CD8-positive, alpha-beta T cell (primary cell): ENCODE measurements at regions of chr11 and their contacts with region 1.

Region 1: DNA sequence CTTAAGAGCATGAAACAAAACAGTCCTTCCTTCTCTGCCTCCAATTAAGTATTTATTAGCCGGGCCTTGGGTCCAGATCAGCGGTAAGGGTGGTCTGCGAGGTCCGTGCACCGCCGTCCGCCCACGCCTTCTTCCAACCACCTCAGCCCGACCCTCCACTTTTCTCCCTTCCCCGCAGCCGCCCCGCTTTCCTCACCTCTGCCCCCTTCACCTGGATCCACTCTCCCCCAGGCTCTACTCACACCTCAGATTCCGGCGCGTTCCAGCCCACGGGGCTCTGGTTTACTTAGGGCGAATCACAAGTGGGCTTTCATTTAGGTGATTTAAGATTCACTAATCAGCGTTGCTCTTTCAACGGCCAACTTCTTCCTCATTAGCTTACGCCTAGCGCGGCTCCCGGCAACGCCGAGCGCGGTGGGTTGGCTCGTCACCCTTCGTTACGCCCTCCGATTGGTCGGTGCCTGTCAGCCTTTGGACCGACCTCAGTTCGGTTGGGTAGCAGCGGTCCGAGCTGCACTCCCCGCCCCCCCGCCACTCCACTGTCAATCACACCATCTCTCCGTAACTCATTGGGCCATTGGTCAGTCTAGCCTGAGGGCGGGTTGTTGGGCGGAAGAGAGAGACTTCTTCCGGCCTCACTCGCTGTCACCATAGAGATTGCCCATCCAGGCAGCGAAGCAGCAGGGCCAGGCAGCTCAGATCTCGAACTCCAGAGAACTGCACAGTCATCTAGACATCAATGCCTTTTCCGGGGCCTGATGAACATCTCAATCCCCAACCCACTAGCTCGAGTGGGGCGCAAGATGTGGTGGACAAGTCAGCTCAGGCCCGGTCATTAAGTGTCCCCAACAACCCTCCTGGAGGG is at the start of gene TMEM218:
- DNase-seq: peak; percentile 89 to 99 (median 93)
- ATAC-seq: peak; percentile 88
- H3K4me3 ChIP-seq: peak within 1 kb of the TSS; percentile 89 to 92
- H3K4me3 Mint-ChIP-seq: peak within 1 kb of the TSS; percentile 99
- H3K27ac ChIP-seq: peak within 1 kb of the TSS; percentile 75 to 86
- H3K27ac Mint-ChIP-seq: peak within 1 kb of the TSS; percentile 96
- H3K4me1 ChIP-seq: peaks cover 15% of the 10 kb centered on the region
- H3K4me1 Mint-ChIP-seq: peaks cover 20% of the 10 kb centered on the region
- H3K27me3 ChIP-seq: no peaks in the 10 kb centered on the region
- H3K27me3 Mint-ChIP-seq: no peaks in the 10 kb centered on the region
- CTCF ChIP-seq: no peak
- total RNA-seq, gene TMEM218: 2.5 to 3.4 TPM

Region 2: GRCh38 chr11:124622531-124623451 is 488.8 kb before region 1 on chr11 and contains the start of gene TBRG1:
- CTCF ChIA-PET with region 1: no interaction called
- POLR2A ChIA-PET with region 1: no interaction called
- intact Hi-C with region 1: loop called (anchors 2 to 10 kb)
- DNase-seq: peak; percentile 62 to 95 (median 84)
- ATAC-seq: peak; percentile 97
- H3K4me3 ChIP-seq: peak within 1 kb of the TSS; percentile 94 to 100
- H3K4me3 Mint-ChIP-seq: peak within 1 kb of the TSS; percentile 97
- H3K27ac ChIP-seq: peak within 1 kb of the TSS; percentile 95 to 97
- H3K27ac Mint-ChIP-seq: peak within 1 kb of the TSS; percentile 99
- H3K4me1 ChIP-seq: peaks cover 16% of the 10 kb centered on the region
- H3K4me1 Mint-ChIP-seq: peaks cover 43% of the 10 kb centered on the region
- H3K27me3 ChIP-seq: no peaks in the 10 kb centered on the region
- H3K27me3 Mint-ChIP-seq: peaks cover 6% of the 10 kb centered on the region
- CTCF ChIP-seq: no peak
- total RNA-seq, gene TBRG1: 59.2 to 61.0 TPM

Region 3: DNA sequence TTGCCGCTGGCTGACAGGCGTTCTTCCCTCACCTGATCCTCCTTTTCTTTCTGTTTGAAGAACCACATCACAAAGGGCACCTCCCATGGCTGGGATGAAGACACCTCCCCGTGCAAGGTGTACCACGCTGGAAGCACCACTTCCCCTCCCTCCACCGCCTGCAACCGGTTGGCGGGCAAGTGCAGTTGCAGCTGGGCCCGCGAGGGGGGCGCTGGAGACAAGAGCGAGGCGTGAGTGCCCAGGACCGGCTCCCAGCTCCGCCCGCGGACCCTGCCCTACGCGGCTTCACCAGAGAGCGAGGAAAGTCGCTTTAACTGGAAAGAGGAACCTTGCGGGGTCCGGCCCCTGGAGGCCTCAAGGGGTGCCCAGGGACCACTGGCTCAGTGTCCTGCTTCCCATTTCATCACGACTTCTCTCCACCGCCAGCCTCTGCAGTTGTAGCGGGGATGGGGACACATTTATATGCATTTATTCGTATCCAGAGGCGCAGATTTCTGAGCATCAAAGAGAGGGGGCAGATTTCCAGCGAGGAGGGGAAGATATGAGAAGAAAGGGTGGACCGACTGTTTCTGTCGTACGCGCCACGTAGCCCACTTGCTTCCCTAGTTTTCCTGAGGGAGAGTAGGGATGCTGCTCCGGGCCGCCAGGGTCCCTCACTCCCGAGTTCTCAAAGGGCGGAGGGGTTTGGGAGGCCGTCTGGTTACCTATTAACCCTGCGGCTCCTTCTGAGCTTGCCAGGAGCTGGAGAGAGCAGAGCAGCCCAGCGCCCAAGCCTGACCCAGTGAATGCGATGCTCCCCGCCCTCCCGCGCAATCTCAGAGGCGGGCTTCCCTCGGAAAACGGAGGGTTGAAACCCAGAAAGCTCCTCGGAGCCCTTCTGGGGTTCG is 353.0 kb before region 1 on chr11:
- CTCF ChIA-PET with region 1: no interaction called
- POLR2A ChIA-PET with region 1: no interaction called
- intact Hi-C with region 1: loop called in 1 of 2 experiments (anchors 5 kb)
- DNase-seq: peak; percentile 42 to 78 (median 70)
- ATAC-seq: peak; percentile 72
- H3K4me3 ChIP-seq: peak overlapping the region; percentile 6 to 16
- H3K4me3 Mint-ChIP-seq: peak overlapping the region; percentile 58
- H3K27ac ChIP-seq: no peak overlapping the region
- H3K27ac Mint-ChIP-seq: no peak overlapping the region
- H3K4me1 ChIP-seq: peaks cover 34% of the 10 kb centered on the region
- H3K4me1 Mint-ChIP-seq: peaks cover 33% of the 10 kb centered on the region
- H3K27me3 ChIP-seq: peaks cover 32 to 39% of the 10 kb centered on the region in 2 experiments
- H3K27me3 Mint-ChIP-seq: peaks cover 40% of the 10 kb centered on the region
- CTCF ChIP-seq: peak; percentile 81

Region 4: DNA sequence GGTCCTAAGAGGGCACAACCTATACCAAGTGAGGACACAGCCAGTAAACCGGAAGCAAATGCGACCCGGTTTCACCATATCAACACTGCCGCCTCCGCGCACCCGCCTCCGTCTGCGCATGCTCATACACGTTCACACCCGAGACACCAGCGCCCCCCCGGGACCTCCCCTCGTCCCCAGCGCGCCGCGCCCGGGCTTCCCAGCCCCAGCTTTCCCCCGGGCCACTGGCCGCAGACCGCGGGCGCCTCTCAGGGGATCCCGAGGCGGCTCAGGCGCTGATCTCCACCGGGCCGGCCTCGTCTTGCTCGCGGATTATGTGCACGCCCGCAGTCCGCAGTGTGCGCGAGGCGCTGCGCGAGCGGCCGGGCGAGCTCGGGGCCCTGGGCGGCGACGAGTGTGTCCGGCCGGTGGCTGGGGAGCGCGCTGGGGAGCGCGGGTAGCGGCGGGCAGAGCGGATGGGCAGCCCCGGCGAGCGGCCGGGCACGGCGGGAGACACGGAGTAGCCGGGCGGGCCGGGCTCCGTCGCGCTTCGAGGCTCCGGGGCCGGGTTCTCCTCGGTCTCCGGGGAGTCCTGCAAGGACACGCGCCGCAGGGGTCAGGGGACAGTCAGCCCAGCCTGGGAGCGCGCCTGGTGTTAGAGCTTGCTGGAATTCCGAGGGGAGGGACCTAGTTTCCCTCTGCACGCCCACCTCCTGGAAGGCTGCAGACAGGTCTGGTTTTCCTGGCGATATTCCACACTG is 190.5 kb before region 1 on chr11:
- CTCF ChIA-PET with region 1: no interaction called
- POLR2A ChIA-PET with region 1: interaction called, 3 read pairs
- intact Hi-C with region 1: loop called in 1 of 2 experiments (anchors 1 kb)
- DNase-seq: peak; percentile 53 to 94 (median 81)
- ATAC-seq: peak; percentile 87
- H3K4me3 ChIP-seq: peak overlapping the region; percentile 25 to 42
- H3K4me3 Mint-ChIP-seq: peak overlapping the region; percentile 83
- H3K27ac ChIP-seq: peak overlapping the region in 1 of 2 experiments; percentile 42
- H3K27ac Mint-ChIP-seq: peak overlapping the region; percentile 77
- H3K4me1 ChIP-seq: peaks cover 28% of the 10 kb centered on the region
- H3K4me1 Mint-ChIP-seq: peaks cover 27% of the 10 kb centered on the region
- H3K27me3 ChIP-seq: no peaks in the 10 kb centered on the region
- H3K27me3 Mint-ChIP-seq: no peaks in the 10 kb centered on the region
- CTCF ChIP-seq: no peak

Region 5: DNA sequence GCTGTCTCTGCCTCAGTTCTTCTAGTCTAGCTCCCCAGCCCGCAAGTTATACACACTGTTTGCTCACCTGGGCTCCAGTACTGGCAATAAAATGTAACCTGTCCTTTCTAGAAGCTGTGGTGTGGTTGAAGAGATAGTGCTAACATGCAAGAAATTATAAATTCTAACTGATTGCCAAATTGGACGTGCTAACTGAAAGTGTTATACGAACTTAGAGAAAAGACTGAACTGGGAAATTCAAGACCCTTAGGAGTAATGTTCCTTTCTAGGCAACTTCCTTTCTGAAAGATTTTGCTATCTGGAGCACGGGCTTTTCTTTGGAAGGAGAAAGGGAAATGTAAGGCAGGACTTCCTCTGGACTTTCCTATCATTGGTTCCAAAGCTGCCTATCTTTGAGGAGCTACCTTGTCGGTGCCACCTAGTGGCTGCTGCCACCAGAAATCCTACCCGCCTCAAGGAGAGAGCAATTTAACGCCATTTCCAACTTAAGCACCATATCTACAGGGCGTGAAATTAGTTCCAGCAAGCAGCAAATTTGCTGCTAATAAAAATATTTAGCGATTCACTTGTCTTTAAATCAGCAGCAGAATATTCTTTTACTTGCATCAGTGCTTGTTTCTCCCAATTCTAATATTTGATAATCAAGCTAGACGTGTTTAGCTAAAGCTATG is 12.5 kb after region 1 on chr11:
- CTCF ChIA-PET with region 1: interaction called, 13 read pairs
- POLR2A ChIA-PET with region 1: interaction called, 14 read pairs
- intact Hi-C with region 1: no loop called
- DNase-seq: peak in 5 of 9 experiments; percentile 28 to 64 (median 33)
- ATAC-seq: peak; percentile 48
- H3K4me3 ChIP-seq: no peak overlapping the region
- H3K4me3 Mint-ChIP-seq: no peak overlapping the region
- H3K27ac ChIP-seq: no peak overlapping the region
- H3K27ac Mint-ChIP-seq: no peak overlapping the region
- H3K4me1 ChIP-seq: no peaks in the 10 kb centered on the region
- H3K4me1 Mint-ChIP-seq: peaks cover 7% of the 10 kb centered on the region
- H3K27me3 ChIP-seq: peaks cover 0 to 12% of the 10 kb centered on the region in 2 experiments
- H3K27me3 Mint-ChIP-seq: peaks cover 24% of the 10 kb centered on the region
- CTCF ChIP-seq: peak; percentile 18

Region 6: DNA sequence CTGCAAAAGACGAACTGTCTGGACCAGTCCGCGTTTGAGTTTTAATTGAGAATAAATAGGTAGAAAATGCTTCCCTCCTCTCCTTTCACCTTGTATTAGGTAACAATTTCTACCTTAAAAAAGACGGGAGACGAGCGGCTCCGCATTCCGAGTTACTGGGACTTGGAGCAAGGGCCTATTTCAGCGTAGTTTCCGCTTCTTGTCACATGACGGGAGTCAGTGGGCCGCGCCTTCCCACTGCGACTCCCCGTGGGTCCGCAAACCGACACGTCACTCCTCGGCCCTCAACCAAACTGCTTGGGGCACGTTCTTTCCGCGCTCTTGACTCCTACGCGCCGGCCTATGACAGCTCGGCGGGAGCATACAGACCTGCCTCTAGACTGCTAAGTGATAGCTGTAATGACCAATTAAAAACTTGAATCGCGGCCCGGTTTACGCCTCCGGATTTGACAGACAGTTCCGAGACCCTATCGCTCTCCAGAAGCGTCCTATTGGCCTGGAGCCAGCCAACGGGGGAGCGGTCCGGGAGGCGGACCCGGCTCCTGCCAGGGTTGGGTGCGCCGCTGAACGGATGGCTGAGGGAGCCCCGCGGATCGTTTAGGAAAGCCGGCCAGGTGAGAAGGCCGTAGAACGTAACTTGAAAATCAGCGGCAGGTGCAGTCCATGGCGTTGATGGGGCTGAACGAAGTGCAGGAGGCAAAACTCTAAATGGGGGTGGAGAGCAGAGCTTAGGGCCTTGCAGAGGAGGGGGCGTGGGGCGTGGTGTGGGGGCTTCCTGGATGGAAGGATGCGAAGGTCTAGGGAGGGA is 480.9 kb after region 1 on chr11 and contains the start of gene STT3A:
- CTCF ChIA-PET with region 1: no interaction called
- POLR2A ChIA-PET with region 1: no interaction called
- intact Hi-C with region 1: loop called (anchors 5 kb)
- DNase-seq: peak; percentile 96 to 99 (median 98)
- ATAC-seq: peak; percentile 91
- H3K4me3 ChIP-seq: peak within 1 kb of the TSS; percentile 90 to 97
- H3K4me3 Mint-ChIP-seq: peak within 1 kb of the TSS; percentile 92
- H3K27ac ChIP-seq: peak within 1 kb of the TSS; percentile 88 to 96
- H3K27ac Mint-ChIP-seq: peak within 1 kb of the TSS; percentile 98
- H3K4me1 ChIP-seq: peaks cover 15% of the 10 kb centered on the region
- H3K4me1 Mint-ChIP-seq: peaks cover 43% of the 10 kb centered on the region
- H3K27me3 ChIP-seq: no peaks in the 10 kb centered on the region
- H3K27me3 Mint-ChIP-seq: no peaks in the 10 kb centered on the region
- CTCF ChIP-seq: no peak
- total RNA-seq, gene STT3A: 45.5 to 46.8 TPM

Region 7: GRCh38 chr11:126268708-126269579 is 1157.4 kb after region 1 on chr11 and contains the starts of genes FOXRED1 and SRPRA:
- CTCF ChIA-PET with region 1: no interaction called
- POLR2A ChIA-PET with region 1: no interaction called
- intact Hi-C with region 1: loop called in 1 of 2 experiments (anchors 2 kb)
- DNase-seq: peak; percentile 99 to 100 (median 100)
- ATAC-seq: peak; percentile 99
- H3K4me3 ChIP-seq: peak within 1 kb of the TSS; percentile 90 to 98
- H3K4me3 Mint-ChIP-seq: peak within 1 kb of the TSS; percentile 96
- H3K27ac ChIP-seq: peak within 1 kb of the TSS; percentile 90 to 94
- H3K27ac Mint-ChIP-seq: peak within 1 kb of the TSS; percentile 98
- H3K4me1 ChIP-seq: peaks cover 24% of the 10 kb centered on the region
- H3K4me1 Mint-ChIP-seq: peaks cover 39% of the 10 kb centered on the region
- H3K27me3 ChIP-seq: no peaks in the 10 kb centered on the region
- H3K27me3 Mint-ChIP-seq: no peaks in the 10 kb centered on the region
- CTCF ChIP-seq: no peak
- total RNA-seq, gene FOXRED1: 27.4 to 30.5 TPM
- total RNA-seq, gene SRPRA: 234 to 242 TPM